ENCODE measurements at regions of chr19 and their contacts with region 1.

Region 1: GRCh38 chr19:17001603-17002183 is 24.9 kb downstream of the CPAMD8 start:
- DNase-seq: peak; percentile 53 to 96 (median 91)
- ATAC-seq: peak; percentile 99
- H3K4me3 ChIP-seq: peak overlapping the region; percentile 43
- H3K4me3 Mint-ChIP-seq: peak overlapping the region; percentile 66 to 81 (median 76)
- H3K27ac ChIP-seq: peak overlapping the region; percentile 64
- H3K27ac Mint-ChIP-seq: peak overlapping the region; percentile 73 to 95 (median 92)
- H3K4me1 ChIP-seq: peaks cover 21% of the 10 kb centered on the region in 2 donors
- H3K4me1 Mint-ChIP-seq: peaks cover 8 to 35% (median 22%) of the 10 kb centered on the region in 7 donors
- H3K27me3 ChIP-seq: no peaks in the 10 kb centered on the region
- H3K27me3 Mint-ChIP-seq: peaks cover 0 to 3% (median 0%) of the 10 kb centered on the region in 5 donors

Region 2: GRCh38 chr19:16829010-16829821 is 172.5 kb before region 1 on chr19 and contains the start of gene SIN3B:
- CTCF ChIA-PET with region 1: no interaction called
- POLR2A ChIA-PET with region 1: no interaction called
- intact Hi-C with region 1: loop called in 1 of 2 experiments (anchors 1 kb)
- DNase-seq: peak; percentile 84 to 94 (median 89)
- ATAC-seq: peak; percentile 97
- H3K4me3 ChIP-seq: peak within 1 kb of the TSS; percentile 67
- H3K4me3 Mint-ChIP-seq: peak within 1 kb of the TSS; percentile 77 to 90 (median 86)
- H3K27ac ChIP-seq: peak within 1 kb of the TSS; percentile 93
- H3K27ac Mint-ChIP-seq: peak within 1 kb of the TSS; percentile 56 to 95 (median 89)
- H3K4me1 ChIP-seq: peaks cover 8% of the 10 kb centered on the region in 2 donors
- H3K4me1 Mint-ChIP-seq: peaks cover 16 to 54% (median 42%) of the 10 kb centered on the region in 7 donors
- H3K27me3 ChIP-seq: no peaks in the 10 kb centered on the region
- H3K27me3 Mint-ChIP-seq: peaks cover 11 to 27% (median 21%) of the 10 kb centered on the region in 5 donors
- total RNA-seq, gene SIN3B: 42.7 to 105 (median 102) TPM

Region 3: GRCh38 chr19:16897154-16897855 is 104.4 kb before region 1 on chr19:
- CTCF ChIA-PET with region 1: no interaction called
- POLR2A ChIA-PET with region 1: no interaction called
- intact Hi-C with region 1: loop called (anchors 2 kb)
- DNase-seq: peak in 7 of 9 donors; percentile 9 to 77 (median 32)
- ATAC-seq: peak; percentile 80
- H3K4me3 ChIP-seq: peak overlapping the region; percentile 50
- H3K4me3 Mint-ChIP-seq: peak overlapping the region in 9 of 10 donors; percentile 43 to 81 (median 76)
- H3K27ac ChIP-seq: no peak overlapping the region
- H3K27ac Mint-ChIP-seq: peak overlapping the region in 2 of 9 donors; percentile 47 to 77
- H3K4me1 ChIP-seq: peaks cover 0 to 5% of the 10 kb centered on the region in 2 donors
- H3K4me1 Mint-ChIP-seq: peaks cover 13 to 36% (median 22%) of the 10 kb centered on the region in 7 donors
- H3K27me3 ChIP-seq: no peaks in the 10 kb centered on the region
- H3K27me3 Mint-ChIP-seq: peaks cover 6 to 50% (median 19%) of the 10 kb centered on the region in 5 donors

Region 4: DNA sequence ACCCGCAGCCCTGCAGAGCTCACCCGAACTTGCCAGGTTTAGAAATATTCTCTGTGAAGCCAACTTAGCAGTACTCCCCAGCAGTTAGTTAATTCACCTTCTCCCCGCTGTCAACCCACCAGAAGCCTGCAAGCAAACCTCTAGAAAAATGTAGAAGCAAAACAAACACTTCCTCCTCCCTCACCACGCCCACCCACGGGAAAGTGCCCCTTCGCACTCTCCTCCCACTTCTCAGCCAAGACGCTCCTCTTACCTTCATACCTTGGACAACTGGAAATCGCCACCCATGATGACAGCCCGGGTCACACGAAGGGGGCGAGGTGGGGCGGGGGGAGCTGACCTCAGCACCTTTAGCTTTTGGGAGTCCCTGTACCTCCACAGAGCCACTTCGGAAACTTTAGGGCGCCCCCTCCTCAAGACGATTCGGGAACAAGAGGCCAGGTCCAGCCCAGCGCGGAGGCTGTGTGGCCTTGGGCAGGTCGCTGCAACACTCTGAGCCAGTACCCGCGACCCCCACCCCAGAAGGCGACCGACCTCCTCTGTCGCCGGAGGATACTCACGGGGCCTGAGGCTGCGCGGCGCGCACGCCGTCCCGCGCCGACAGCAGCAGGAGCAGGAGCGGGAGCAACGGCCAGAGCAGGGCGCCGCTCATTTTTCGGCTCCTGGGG is 24.4 kb after region 1 on chr19:
- CTCF ChIA-PET with region 1: no interaction called
- POLR2A ChIA-PET with region 1: no interaction called
- intact Hi-C with region 1: loop called in 1 of 2 experiments (anchors 2 kb)
- DNase-seq: peak in 5 of 9 donors; percentile 10 to 24 (median 18)
- ATAC-seq: peak; percentile 48
- H3K4me3 ChIP-seq: peak overlapping the region; percentile 48
- H3K4me3 Mint-ChIP-seq: peak overlapping the region; percentile 2 to 85 (median 76)
- H3K27ac ChIP-seq: no peak overlapping the region
- H3K27ac Mint-ChIP-seq: peak overlapping the region in 2 of 9 donors; percentile 32 to 53
- H3K4me1 ChIP-seq: peaks cover 0 to 7% of the 10 kb centered on the region in 2 donors
- H3K4me1 Mint-ChIP-seq: peaks cover 3 to 14% (median 8%) of the 10 kb centered on the region in 7 donors
- H3K27me3 ChIP-seq: peaks cover 0 to 11% of the 10 kb centered on the region in 2 donors
- H3K27me3 Mint-ChIP-seq: peaks cover 36 to 62% (median 45%) of the 10 kb centered on the region in 5 donors

Measured in naive thymus-derived CD4-positive, alpha-beta T cell (primary cell).